Endothelial cell of umbilical vein (primary cell): ENCODE measurements at regions of chr10 and their contacts with region 1.

Region 1: DNA sequence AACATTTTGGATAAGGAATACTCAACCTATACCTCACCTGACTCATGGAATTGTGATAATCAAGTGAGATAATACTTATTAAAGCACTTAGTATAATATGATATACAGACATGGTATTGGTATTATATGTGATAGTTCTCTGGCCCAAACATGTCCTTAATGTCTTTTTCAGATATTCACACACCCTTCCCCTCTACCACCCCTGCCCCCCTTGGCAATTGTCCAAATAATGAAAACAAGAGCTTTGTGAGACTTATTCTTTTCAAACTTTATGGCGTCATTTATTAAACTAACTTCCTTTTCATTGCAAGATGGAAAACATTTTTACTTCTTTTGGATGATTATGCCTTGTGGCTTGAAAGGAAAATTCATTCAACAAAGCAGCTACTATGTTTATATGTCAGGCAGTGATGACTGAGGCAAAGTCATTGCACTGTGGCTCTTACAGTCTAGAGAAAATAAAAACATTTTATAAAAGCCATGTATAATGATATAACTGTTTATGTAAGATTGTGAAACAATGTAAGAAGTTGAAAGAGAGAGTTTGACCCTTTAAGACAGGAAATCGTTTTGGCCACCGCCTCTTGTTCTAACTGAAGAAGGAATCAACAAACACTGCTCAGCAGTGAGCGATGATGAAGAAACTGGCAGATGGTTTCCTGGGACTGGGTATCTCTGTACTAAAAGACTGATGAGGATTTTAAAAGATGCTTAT is 27.4 kb downstream of the MINPP1 start:
- DNase-seq: peak; percentile 87
- H3K4me3 ChIP-seq: peak overlapping the region in 1 of 3 experiments; percentile 11
- H3K27ac ChIP-seq: peak overlapping the region; percentile 59
- H3K4me1 ChIP-seq: peaks cover 17% of the 10 kb centered on the region
- H3K27me3 ChIP-seq: no peaks in the 10 kb centered on the region
- CTCF ChIP-seq: no peak
- POLR2A ChIP-seq: no peak

Region 2: DNA sequence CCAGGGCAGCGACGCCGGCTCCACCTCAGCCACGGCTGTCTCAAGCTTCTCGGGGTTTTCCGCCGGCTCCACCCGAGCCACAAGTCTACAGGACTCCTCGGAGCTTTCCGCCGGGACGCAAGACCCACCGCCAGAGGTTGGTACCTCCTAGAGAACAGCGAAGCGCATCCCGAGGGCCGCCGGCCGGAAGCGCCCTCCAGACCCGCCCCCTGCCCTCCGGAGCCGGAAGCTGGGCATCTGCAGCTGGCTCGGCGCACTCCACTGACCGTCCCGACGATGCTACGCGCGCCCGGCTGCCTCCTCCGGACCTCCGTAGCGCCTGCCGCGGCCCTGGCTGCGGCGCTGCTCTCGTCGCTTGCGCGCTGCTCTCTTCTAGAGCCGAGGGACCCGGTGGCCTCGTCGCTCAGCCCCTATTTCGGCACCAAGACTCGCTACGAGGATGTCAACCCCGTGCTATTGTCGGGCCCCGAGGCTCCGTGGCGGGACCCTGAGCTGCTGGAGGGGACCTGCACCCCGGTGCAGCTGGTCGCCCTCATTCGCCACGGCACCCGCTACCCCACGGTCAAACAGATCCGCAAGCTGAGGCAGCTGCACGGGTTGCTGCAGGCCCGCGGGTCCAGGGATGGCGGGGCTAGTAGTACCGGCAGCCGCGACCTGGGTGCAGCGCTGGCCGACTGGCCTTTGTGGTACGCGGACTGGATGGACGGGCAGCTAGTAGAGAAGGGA is 27.3 kb before region 1 on chr10 and contains the start of gene MINPP1:
- CTCF ChIA-PET with region 1: no interaction called
- POLR2A ChIA-PET with region 1: no interaction called
- dilution Hi-C with region 1: no loop called
- intact Hi-C with region 1: no loop called
- DNase-seq: peak; percentile 69
- H3K4me3 ChIP-seq: peak within 1 kb of the TSS; percentile 56 to 87 (median 74)
- H3K27ac ChIP-seq: peak within 1 kb of the TSS; percentile 26
- H3K4me1 ChIP-seq: peaks cover 17% of the 10 kb centered on the region
- H3K27me3 ChIP-seq: no peaks in the 10 kb centered on the region
- CTCF ChIP-seq: no peak
- POLR2A ChIP-seq: peak; percentile 82
- total RNA-seq, gene MINPP1: 21.9 and 23.8 TPM in 2 replicates

Region 3: GRCh38 chr10:87559392-87559791 is 27.3 kb after region 1 on chr10:
- CTCF ChIA-PET with region 1: no interaction called
- POLR2A ChIA-PET with region 1: no interaction called
- dilution Hi-C with region 1: no loop called
- intact Hi-C with region 1: no loop called
- DNase-seq: no peak
- H3K4me3 ChIP-seq: no peak overlapping the region
- H3K27ac ChIP-seq: no peak overlapping the region
- H3K4me1 ChIP-seq: peaks cover 3% of the 10 kb centered on the region
- H3K27me3 ChIP-seq: peaks cover 0 to 2% of the 10 kb centered on the region in 2 experiments
- CTCF ChIP-seq: no peak
- POLR2A ChIP-seq: no peak

Region 4: DNA sequence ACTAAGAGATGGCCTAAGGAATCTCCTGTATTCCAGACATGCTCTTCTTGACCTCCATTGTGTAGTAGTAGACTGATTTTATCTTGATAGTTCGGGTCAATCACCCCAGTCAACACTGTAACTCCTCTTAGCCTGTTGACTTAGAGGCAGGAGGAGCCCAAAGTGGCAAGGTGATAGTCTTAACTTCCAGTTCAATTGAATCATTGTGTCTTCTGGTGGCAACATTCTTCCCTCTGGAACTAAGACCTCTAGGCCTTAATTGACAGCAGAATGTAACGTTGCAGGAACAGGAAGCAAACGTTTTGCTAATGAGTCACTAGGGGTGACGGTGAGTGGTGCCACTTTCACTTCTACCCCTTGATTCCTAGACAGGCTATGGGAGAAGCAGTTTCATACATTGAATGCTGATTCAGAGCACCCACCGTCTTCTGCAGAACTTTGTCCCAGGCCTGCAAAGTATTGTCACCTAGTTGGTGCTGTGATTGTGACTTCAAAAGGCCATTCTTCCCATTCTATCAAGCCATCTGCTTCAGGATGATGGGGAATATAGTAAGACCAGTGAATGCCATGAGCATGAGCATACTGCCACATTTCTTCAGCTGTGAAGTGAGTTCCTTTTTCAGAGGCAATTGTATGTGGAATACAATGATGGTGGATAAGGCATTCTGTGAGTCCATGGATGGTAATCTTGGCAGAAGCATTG is 103.7 kb after region 1 on chr10:
- CTCF ChIA-PET with region 1: interaction called, 3 read pairs
- POLR2A ChIA-PET with region 1: no interaction called
- dilution Hi-C with region 1: no loop called
- intact Hi-C with region 1: loop called (anchors 5 kb)
- DNase-seq: peak; percentile 80
- H3K4me3 ChIP-seq: no peak overlapping the region
- H3K27ac ChIP-seq: peak overlapping the region; percentile 71
- H3K4me1 ChIP-seq: peaks cover 20% of the 10 kb centered on the region
- H3K27me3 ChIP-seq: no peaks in the 10 kb centered on the region
- CTCF ChIP-seq: no peak
- POLR2A ChIP-seq: no peak

Region 5: DNA sequence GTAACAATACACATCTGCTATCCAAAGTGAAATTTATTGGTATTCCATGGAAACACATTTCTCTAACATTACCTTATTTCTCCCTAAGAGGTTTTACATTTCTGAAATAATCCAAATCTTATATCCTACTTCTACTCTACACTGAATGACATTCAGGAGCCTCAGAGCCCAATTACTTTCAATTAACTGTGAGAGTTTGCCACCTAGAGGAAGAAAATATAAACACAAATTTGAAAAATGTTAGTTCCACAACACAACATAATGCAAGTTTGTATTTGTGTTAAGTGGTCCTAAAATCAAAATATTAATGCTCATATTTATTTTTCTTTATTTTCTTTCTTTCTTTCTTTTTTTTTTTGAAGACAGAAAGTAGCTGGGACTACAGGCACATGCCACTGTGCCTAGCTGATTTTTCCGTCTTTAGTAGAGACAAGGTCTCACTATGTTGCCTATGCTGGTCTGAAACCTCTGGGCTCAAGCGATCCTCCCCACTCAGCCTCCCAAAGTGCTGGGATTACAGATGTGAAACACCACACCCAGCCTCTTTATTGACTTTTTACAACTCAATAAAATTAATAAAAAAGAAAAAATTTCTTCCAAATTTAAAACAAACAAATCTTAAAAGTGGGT is 239.9 kb after region 1 on chr10:
- CTCF ChIA-PET with region 1: interaction called, 18 read pairs
- POLR2A ChIA-PET with region 1: no interaction called
- dilution Hi-C with region 1: no loop called
- intact Hi-C with region 1: loop called (anchors 1 kb)
- DNase-seq: peak; percentile 57
- H3K4me3 ChIP-seq: no peak overlapping the region
- H3K27ac ChIP-seq: no peak overlapping the region
- H3K4me1 ChIP-seq: peaks cover 17% of the 10 kb centered on the region
- H3K27me3 ChIP-seq: no peaks in the 10 kb centered on the region
- CTCF ChIP-seq: peak; percentile 21 to 35
- POLR2A ChIP-seq: no peak

Region 6: DNA sequence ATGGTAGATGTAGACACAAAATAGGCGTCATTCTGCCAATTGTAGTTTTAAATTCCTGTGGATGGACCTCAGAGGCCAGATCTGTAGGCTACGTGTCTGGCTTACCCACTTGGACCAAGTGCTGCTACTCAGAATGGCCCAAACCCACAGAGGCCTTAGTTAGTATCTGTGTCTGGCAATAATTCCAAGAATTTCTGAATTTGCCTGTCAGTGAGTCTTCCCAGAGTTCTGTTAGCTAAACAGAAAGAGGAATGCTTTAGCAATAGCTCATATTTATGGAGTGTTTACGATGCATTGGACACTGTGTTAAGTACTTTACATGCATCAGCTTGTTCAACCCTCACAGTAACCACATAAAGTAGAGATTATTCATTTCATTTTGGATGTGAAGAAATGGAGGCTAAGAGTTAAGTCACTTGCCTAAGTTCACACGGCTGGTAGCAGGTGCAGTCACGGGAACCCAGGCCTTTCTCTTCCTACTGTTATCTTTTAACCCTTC is 563.2 kb after region 1 on chr10:
- CTCF ChIA-PET with region 1: no interaction called
- POLR2A ChIA-PET with region 1: no interaction called
- dilution Hi-C with region 1: no loop called
- intact Hi-C with region 1: no loop called
- DNase-seq: no peak
- H3K4me3 ChIP-seq: no peak overlapping the region
- H3K27ac ChIP-seq: no peak overlapping the region
- H3K4me1 ChIP-seq: no peaks in the 10 kb centered on the region
- H3K27me3 ChIP-seq: peaks cover 0 to 2% of the 10 kb centered on the region in 2 experiments
- CTCF ChIP-seq: no peak
- POLR2A ChIP-seq: no peak

Region 7: DNA sequence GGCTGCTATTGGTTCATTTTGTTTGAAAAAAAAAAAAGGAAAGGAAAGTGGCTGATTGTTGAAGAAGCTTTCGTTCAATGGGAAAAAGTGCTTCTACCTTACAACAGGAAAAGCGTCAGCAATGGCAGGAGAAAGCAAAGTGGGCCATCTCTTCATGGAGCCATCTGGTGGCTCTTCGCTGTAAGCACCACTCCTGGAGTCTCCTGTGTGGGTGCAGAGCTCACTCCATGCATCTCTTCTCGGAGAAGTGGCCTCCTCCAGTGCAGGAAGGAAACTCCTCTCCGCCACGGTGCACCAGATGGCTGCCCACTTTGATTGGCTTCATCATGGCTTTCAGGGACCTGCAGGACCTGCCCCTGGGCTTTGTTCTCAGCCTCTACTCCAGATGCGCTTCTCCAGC is 582.3 kb after region 1 on chr10:
- CTCF ChIA-PET with region 1: interaction called, 3 read pairs
- POLR2A ChIA-PET with region 1: no interaction called
- dilution Hi-C with region 1: no loop called
- intact Hi-C with region 1: loop called (anchors 10 kb)
- DNase-seq: peak; percentile 51
- H3K4me3 ChIP-seq: no peak overlapping the region
- H3K27ac ChIP-seq: no peak overlapping the region
- H3K4me1 ChIP-seq: no peaks in the 10 kb centered on the region
- H3K27me3 ChIP-seq: no peaks in the 10 kb centered on the region
- CTCF ChIP-seq: peak; percentile 42 to 71
- POLR2A ChIP-seq: no peak